Right ventricle myocardium inferior (tissue), 1 donor: ENCODE measurements at regions of chr2 and their contacts with region 1.

Region 1: GRCh38 chr2:174039551-174040416 is 74.6 kb upstream of the SP3 start:
- DNase-seq: peak; percentile 89
- ATAC-seq: peak; percentile 91

Region 2: GRCh38 chr2:173884025-173884802 is 155.6 kb before region 1 on chr2:
- intact Hi-C with region 1: loop called (anchors 5 kb)
- DNase-seq: no peak
- ATAC-seq: peak; percentile 69

Region 3: GRCh38 chr2:173965329-173966025 is 74.3 kb before region 1 on chr2 and contains the start of gene SP3:
- intact Hi-C with region 1: loop called (anchors 2 kb)
- DNase-seq: peak; percentile 98
- ATAC-seq: peak; percentile 90
- total RNA-seq, gene SP3: 41.2 TPM

Region 4: DNA sequence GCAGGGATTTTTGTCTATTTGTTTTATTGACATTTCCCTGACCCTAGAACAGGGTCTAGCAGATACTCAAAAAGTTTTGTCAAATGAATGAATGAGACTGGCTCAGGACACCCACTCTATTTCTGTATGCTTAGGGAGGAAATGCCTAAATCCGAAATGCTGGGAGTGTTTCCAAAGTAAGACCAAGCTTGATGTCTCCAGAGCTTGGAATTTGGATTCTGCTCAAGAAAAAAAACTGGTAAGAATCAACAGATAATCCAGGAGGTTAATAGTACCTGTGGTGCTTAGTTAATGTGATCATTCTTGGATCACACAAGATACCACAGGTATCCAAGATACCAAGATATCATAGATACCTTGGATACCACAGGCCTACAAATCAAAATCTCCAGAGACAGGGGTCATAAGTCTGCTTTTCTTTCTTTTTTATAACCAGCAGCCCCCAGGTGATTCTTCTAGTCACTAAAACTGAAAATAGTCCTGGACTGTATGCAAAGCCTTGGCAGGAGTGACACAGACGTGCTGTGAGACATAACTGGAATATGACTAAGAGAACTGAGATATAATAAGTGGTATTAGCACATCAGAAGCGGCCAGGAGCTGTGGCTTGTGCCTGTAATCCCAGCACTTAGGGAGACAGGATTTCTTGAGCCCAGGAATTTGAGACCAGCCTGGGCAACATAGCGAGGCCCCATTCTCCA is 34.7 kb before region 1 on chr2:
- intact Hi-C with region 1: loop called (anchors 5 kb)
- DNase-seq: no peak
- ATAC-seq: peak; percentile 90

Region 5: GRCh38 chr2:174341286-174341994 is 301.7 kb after region 1 on chr2:
- intact Hi-C with region 1: loop called (anchors 10 kb)
- DNase-seq: peak; percentile 95
- ATAC-seq: peak; percentile 85